ENCODE measurements at regions of chr18 and their contacts with region 1.

Region 1: DNA sequence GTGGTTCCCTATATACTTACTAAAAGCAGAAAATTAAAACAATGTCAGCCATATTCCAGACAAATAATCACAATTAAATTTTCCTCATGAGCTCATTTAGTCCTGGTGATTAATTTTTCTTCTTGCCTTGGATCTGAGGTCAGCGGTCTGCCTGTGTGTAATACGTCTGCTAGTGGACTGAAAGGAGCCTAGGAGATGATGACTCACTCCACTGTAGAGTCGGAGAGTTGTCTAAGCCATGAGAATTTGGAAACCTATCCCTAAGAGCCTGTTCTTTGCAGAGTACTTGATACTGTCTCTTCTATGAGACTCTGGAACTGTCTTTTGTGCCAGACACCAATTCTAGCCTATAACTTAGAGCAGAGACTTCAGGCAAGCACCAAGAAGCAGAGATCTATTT is 94.2 kb upstream of the RAB27B start:
- DNase-seq: no peak
- ATAC-seq: peak in 3 of 4 donors; percentile 37 to 91 (median 82)
- H3K4me3 ChIP-seq: no peak overlapping the region
- H3K27ac ChIP-seq: no peak overlapping the region
- H3K4me1 ChIP-seq: no peaks in the 10 kb centered on the region
- H3K27me3 ChIP-seq: no peaks in the 10 kb centered on the region
- CTCF ChIP-seq: no peak
- POLR2A ChIP-seq: no peak

Region 2: DNA sequence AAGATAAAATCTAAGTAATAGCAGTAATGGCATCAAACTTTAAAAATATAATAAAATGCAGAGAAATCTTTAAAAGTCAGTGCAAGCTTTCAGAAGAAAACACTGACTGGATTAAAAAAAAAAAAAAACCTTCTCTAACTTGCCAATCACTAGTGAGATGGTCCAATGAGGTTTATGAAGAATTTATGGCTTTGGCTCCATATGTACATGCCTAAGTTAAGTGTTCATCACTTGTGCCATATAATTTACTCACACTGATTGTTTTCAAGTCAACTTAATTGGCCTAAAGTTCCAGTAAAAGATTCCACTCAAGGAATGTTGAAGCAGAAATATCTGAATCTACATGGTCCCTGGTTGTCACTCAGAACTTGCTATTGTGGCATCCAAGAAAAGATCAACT is 53.6 kb after region 1 on chr18:
- intact Hi-C with region 1: loop called in 1 of 10 experiments (anchors 10 kb)
- DNase-seq: no peak
- ATAC-seq: no peak
- H3K4me3 ChIP-seq: no peak overlapping the region
- H3K27ac ChIP-seq: no peak overlapping the region
- H3K4me1 ChIP-seq: no peaks in the 10 kb centered on the region
- H3K27me3 ChIP-seq: no peaks in the 10 kb centered on the region
- CTCF ChIP-seq: no peak
- POLR2A ChIP-seq: no peak

Region 3: DNA sequence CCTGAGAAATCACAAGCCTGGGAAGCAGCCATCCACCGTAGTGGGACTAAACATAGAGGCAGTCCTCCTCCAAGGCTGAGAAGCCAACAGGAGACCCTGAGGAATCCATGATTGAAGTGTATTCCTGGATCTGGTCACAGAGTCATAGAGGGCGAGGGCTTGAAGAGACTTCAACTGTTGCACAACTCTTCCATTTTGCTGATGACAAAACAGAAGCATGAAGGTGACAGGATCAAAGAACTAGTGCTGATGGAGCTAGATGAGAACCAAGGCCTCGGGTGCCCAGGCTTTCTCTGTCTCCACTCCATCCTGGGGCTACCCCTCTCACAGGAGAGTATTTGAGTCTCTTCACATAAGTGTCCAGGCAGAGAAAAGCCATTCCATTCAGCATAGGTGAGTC is 64.1 kb after region 1 on chr18:
- intact Hi-C with region 1: no loop called
- DNase-seq: no peak
- ATAC-seq: no peak
- H3K4me3 ChIP-seq: no peak overlapping the region
- H3K27ac ChIP-seq: no peak overlapping the region
- H3K4me1 ChIP-seq: no peaks in the 10 kb centered on the region
- H3K27me3 ChIP-seq: no peaks in the 10 kb centered on the region
- CTCF ChIP-seq: no peak
- POLR2A ChIP-seq: no peak

Region 4: GRCh38 chr18:55189972-55190371 is 455.9 kb after region 1 on chr18:
- intact Hi-C with region 1: no loop called
- DNase-seq: no peak
- ATAC-seq: no peak
- H3K4me3 ChIP-seq: no peak overlapping the region
- H3K27ac ChIP-seq: no peak overlapping the region
- H3K4me1 ChIP-seq: no peaks in the 10 kb centered on the region
- H3K27me3 ChIP-seq: no peaks in the 10 kb centered on the region
- CTCF ChIP-seq: no peak
- POLR2A ChIP-seq: no peak

Measured in heart left ventricle (tissue), 16 donors.